HepG2 (cell line): ENCODE measurements at regions of chr14 and their contacts with region 1.

Region 1: DNA sequence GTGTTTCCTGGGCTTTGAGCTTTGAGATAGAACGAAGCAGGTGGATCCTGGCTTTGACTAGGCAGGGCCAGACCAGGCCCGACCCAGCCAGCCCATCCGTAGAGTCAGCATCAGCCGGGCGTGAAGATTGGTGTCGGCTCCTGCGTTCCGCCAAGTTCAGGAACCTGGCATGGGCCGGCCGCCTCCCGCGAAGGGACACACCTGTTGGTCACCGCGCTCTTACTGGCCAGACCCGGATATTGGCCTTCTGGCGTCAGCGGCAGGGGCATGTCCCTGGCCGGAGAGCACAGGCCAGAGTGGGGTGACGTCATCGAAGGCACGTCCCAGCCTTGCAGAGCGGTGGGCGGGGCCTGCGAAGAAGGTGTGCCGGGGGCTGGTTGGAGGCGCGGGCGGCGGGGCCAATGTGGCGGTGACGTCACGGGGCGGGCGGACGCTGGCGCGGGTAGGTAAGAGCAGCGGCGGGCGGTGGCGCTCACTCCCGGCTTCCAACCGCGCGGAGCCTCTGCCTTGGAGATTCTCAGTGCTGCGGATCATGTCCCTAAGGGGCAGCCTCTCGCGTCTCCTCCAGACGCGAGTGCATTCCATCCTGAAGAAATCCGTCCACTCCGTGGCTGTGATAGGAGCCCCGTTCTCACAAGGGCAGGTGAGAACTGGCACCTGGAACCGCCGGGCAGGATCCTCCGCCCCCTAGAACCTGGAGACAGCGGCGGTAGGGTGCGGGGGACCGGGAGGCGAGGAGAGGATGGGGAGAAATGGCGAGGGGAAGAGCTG is at the start of gene ARG2:
- DNase-seq: peak; percentile 95
- ATAC-seq: peak; percentile 94
- H3K4me3 ChIP-seq: peak within 1 kb of the TSS; percentile 81 to 95 (median 88)
- H3K27ac ChIP-seq: peak within 1 kb of the TSS; percentile 61
- H3K4me1 ChIP-seq: peaks cover 51% of the 10 kb centered on the region
- H3K27me3 ChIP-seq: 0 out of 5 replicates have a peak, but pooled peaks cover 0 to 5% of the 10 kb centered on the region in 2 experiments
- CTCF ChIP-seq: peak; percentile 66
- EP300 ChIP-seq: no peak
- POLR2A ChIP-seq: peak; percentile 86 to 89
- RAD21 ChIP-seq: no peak
- total RNA-seq, gene ARG2: 37.5 and 59.7 TPM in 2 replicates

Region 2: GRCh38 chr14:67599698-67600561 is 19.7 kb before region 1 on chr14 and contains the start of gene PIGH:
- CTCF ChIA-PET with region 1: no interaction called
- POLR2A ChIA-PET with region 1: interaction called, 11 read pairs
- in situ Hi-C with region 1: no loop called
- intact Hi-C with region 1: no loop called
- DNase-seq: peak; percentile 83
- ATAC-seq: peak; percentile 97
- H3K4me3 ChIP-seq: peak within 1 kb of the TSS; percentile 82 to 89 (median 87)
- H3K27ac ChIP-seq: peak within 1 kb of the TSS; percentile 74
- H3K4me1 ChIP-seq: peaks cover 43% of the 10 kb centered on the region
- H3K27me3 ChIP-seq: no peaks in the 10 kb centered on the region; a peak in 1 of 5 replicates
- CTCF ChIP-seq: peak; percentile 76
- EP300 ChIP-seq: peak in 1 of 2 experiments; percentile 42; a peak in 1 of 4 replicates
- POLR2A ChIP-seq: peak; percentile 62 to 72
- RAD21 ChIP-seq: peak; percentile 83
- total RNA-seq, gene PIGH: 18.7 and 30.0 TPM in 2 replicates